Aorta (tissue), 5 donors: ENCODE measurements at regions of chr1 and their contacts with region 1.

Region 1: GRCh38 chr1:236913371-236914037 is 90.7 kb downstream of the MT1HL1 start:
- DNase-seq: no peak
- ATAC-seq: no peak
- H3K4me3 ChIP-seq: no peak overlapping the region
- H3K27ac ChIP-seq: no peak overlapping the region
- H3K4me1 ChIP-seq: no peaks in the 10 kb centered on the region
- H3K27me3 ChIP-seq: no peaks in the 10 kb centered on the region

Region 2: DNA sequence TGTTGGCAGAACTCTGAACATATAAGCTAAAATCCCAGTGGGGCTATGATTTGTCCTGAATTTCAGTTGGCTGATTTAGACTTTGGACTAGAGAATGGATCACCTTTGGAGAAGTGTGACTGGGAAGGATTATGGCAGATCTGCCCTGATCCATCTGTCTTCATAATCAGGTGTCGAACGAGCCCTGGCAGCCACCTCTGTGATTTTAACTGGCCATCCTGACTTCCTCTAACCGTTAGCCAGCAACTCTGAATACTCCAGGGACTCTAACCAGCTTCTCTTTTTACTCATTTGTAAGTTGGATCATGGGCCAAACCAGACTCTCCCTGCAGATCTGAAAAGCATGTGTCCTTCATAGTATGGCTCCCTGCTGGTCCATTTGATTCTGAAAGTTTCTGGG is 195.2 kb before region 1 on chr1:
- intact Hi-C with region 1: no loop called
- DNase-seq: no peak
- ATAC-seq: peak; percentile 15
- H3K4me3 ChIP-seq: no peak overlapping the region
- H3K27ac ChIP-seq: peak overlapping the region; percentile 2 to 85
- H3K4me1 ChIP-seq: peaks cover 0 to 5% of the 10 kb centered on the region in 2 donors
- H3K27me3 ChIP-seq: no peaks in the 10 kb centered on the region

Region 3: GRCh38 chr1:236893626-236894545 is 19.6 kb before region 1 on chr1:
- intact Hi-C with region 1: no loop called
- DNase-seq: no peak
- ATAC-seq: no peak
- H3K4me3 ChIP-seq: no peak overlapping the region
- H3K27ac ChIP-seq: no peak overlapping the region
- H3K4me1 ChIP-seq: no peaks in the 10 kb centered on the region
- H3K27me3 ChIP-seq: no peaks in the 10 kb centered on the region

Region 4: DNA sequence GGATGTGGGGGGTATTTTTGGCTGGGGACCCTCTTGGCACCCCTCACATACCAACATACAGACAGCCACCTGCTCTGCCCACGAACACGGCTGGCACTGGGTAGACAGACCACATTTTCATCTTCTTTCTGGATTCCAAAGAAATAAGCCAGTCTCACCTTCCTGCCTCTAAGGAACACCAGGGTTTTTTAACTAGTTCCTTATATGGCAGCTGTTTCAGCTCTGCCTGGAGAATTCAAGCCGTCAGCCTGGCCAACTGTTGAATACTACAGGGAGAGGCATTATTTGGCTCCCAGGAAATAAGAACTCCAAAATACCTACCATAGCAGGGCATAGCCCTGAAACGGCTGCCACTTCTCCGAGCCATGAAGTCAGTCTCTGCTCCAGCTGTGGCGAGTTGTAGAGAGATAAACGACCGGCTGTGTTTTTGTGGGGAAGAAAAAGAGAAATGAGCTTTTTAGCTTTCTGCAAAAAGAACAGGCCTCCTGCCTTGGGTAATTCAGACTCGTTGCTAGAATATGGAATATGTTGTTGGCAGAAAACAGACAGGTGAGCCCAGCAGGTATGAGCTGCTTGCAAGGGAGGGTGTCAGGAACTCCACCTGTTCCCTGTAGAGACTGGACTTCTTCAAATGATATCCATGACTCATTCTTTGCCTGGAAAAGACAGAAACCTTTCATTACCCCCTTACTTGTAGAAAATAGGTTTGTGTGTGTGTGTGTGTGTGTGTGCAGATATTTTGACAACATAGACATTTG is 38.9 kb after region 1 on chr1:
- intact Hi-C with region 1: no loop called
- DNase-seq: no peak
- ATAC-seq: peak; percentile 58
- H3K4me3 ChIP-seq: peak overlapping the region in 1 of 2 donors; percentile 38
- H3K27ac ChIP-seq: peak overlapping the region; percentile 89 to 96
- H3K4me1 ChIP-seq: no peaks in the 10 kb centered on the region
- H3K27me3 ChIP-seq: no peaks in the 10 kb centered on the region

Region 5: DNA sequence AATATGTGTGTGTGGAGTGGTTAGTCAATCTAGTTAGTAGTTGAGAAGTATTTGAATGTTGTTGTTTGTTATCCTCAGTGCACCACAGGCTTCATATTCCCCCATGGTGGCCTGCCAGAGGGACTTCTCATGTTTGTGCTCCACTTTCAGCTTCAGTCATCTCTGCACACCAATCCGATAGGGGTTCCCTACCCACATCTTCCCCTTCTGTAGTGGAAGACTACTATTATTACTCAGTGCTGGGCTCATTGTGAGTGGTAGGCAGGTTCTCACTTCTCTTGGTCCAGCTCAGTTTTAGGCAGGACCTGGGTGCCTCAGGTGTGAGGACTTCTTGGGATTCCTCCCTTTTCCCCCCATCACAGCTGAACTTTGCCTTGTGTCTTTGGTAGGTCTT is 76.5 kb after region 1 on chr1:
- intact Hi-C with region 1: loop called in 1 of 2 experiments (anchors 5 kb)
- DNase-seq: no peak
- ATAC-seq: no peak
- H3K4me3 ChIP-seq: no peak overlapping the region
- H3K27ac ChIP-seq: no peak overlapping the region
- H3K4me1 ChIP-seq: no peaks in the 10 kb centered on the region
- H3K27me3 ChIP-seq: no peaks in the 10 kb centered on the region